Endothelial cell of umbilical vein (primary cell): ENCODE measurements at regions of chr3 and their contacts with region 1.

Region 1: DNA sequence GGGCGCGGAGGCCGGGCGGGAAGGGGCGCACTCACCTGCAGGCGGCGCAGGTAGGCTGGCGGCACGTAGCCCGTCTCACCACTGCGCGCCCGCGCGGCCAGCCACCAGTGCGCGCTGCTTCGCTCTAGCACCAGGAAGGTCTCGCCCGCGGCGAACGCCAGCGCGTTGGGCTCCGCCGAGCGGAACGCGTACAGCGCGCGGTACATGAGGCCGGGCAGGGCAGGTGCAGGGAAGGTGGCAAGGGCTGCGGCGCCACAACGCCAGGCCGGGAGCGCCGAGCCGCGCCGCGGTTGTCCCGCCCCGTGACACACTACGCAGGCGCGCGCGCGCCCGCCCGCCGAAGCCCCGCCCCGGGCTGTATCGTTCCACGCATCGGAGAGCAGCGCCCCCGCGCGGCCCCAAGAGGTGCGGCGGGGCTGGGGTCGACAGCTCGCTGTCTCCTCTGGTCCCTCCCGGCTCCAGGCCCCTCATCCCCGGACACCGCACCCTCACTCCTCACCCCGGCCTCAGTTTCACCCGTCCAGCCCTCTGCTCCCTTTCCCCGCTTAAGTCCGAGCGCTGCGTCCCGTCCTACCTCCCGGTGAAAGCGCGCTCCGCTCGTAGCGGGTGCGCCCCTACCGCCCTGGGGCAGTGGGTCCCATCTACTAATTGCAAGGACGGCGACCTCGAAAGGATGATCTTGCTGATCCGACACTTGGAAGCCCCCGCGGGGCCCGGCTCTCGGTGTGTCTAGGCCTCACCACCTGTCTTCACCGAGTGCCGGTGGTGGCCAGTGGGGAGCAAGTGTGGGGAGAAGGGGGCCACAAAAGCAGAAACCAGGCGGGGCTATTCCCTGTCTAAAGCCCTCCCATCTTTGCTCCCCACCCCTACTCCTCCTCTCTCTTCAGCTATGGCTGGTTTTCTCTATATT is at the start of gene NCKIPSD:
- DNase-seq: peak; percentile 84
- H3K4me3 ChIP-seq: peak within 1 kb of the TSS; percentile 6 to 90 (median 42)
- H3K27ac ChIP-seq: no peak within 1 kb of the TSS
- H3K4me1 ChIP-seq: peaks cover 14% of the 10 kb centered on the region
- H3K27me3 ChIP-seq: no peaks in the 10 kb centered on the region
- CTCF ChIP-seq: peak; percentile 88 to 90
- POLR2A ChIP-seq: peak; percentile 95
- total RNA-seq, gene NCKIPSD: 12.8 and 13.4 TPM in 2 replicates

Region 2: GRCh38 chr3:48609088-48610005 is 76.5 kb before region 1 on chr3 and contains the start of gene UQCRC1:
- CTCF ChIA-PET with region 1: no interaction called
- POLR2A ChIA-PET with region 1: no interaction called
- dilution Hi-C with region 1: no loop called
- intact Hi-C with region 1: loop called (anchors 2 kb)
- DNase-seq: peak; percentile 96
- H3K4me3 ChIP-seq: peak within 1 kb of the TSS; percentile 52 to 85 (median 73)
- H3K27ac ChIP-seq: peak within 1 kb of the TSS; percentile 9
- H3K4me1 ChIP-seq: peaks cover 13% of the 10 kb centered on the region
- H3K27me3 ChIP-seq: no peaks in the 10 kb centered on the region
- CTCF ChIP-seq: peak; percentile 52 to 84
- POLR2A ChIP-seq: peak; percentile 96
- total RNA-seq, gene UQCRC1: 184 and 186 TPM in 2 replicates

Region 3: DNA sequence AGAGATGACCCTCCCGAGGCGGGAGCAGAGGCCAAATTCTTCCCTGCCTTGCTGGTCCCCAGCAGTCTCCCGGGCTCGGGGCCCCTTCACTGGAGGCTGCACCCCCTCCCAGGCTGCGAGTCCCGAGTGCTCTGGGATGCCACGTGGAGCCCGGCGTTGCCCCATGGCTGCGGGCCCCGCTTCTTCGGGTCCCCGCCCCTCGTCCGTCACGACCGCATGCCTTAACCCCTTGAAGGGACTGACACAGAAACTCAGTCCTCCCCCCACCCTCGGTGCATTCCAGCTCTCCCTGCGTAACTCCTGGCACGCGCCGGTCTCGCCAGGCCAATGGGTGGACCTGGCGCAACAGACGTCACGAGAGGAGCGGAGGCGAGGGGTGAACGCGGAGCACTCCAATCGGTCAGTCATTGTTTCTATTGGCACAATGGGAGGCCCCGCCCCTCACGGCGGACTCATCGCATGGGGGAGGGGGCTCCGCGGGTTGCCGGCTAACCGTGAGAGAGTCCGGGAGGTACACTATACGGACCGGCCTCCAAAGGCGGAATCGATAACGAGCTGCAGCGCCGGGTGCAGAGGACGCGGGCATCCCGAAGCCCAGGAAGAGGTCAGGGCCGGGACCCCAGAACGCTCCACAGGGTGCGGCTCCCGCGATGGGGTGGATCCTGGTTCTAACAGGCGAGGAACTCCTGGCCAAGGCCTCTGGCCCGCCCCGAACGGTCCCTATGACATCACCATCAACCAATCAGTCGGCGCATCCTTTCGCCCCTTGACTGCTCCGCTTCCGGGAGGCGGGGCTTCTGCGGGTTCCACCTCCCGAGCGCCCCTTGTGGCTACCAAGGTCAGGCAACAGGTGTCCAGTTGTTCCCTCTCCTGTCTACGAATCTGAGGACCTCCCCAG is 22.2 kb before region 1 on chr3:
- CTCF ChIA-PET with region 1: interaction called, 14 read pairs
- POLR2A ChIA-PET with region 1: no interaction called
- dilution Hi-C with region 1: no loop called
- intact Hi-C with region 1: loop called (anchors 2 kb)
- DNase-seq: peak; percentile 87
- H3K4me3 ChIP-seq: peak overlapping the region; percentile 28 to 42 (median 28)
- H3K27ac ChIP-seq: peak overlapping the region; percentile 72
- H3K4me1 ChIP-seq: peaks cover 6% of the 10 kb centered on the region
- H3K27me3 ChIP-seq: peaks cover 8 to 10% of the 10 kb centered on the region in 2 experiments
- CTCF ChIP-seq: peak; percentile 85 to 89
- POLR2A ChIP-seq: peak; percentile 63

Region 4: GRCh38 chr3:48708481-48708889 is 22.6 kb after region 1 on chr3:
- CTCF ChIA-PET with region 1: no interaction called
- POLR2A ChIA-PET with region 1: no interaction called
- dilution Hi-C with region 1: no loop called
- intact Hi-C with region 1: no loop called
- DNase-seq: no peak
- H3K4me3 ChIP-seq: no peak overlapping the region
- H3K27ac ChIP-seq: no peak overlapping the region
- H3K4me1 ChIP-seq: peaks cover 3% of the 10 kb centered on the region
- H3K27me3 ChIP-seq: no peaks in the 10 kb centered on the region
- CTCF ChIP-seq: no peak
- POLR2A ChIP-seq: no peak